Psoas muscle (tissue), 8 donors: ENCODE measurements at regions of chr1 and their contacts with region 1.

Region 1: DNA sequence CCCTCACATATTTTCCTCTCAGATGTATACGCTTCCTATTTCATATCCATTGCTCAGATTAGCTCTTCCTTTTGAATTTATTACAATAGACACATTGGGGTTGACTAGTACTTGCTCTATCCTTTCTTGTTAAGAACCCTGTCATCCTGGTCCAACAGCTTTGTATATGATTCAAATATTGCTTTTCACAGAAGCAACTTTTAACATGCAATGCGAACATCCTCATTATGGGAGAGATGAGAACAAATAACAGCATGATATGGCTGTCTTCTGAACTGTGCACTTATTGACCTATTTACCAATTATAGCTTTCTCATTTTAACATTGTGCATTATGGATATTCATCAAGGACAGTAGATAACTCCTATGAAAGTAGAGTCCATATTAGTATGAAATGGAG is 510.8 kb downstream of the PTPRC start:
- DNase-seq: no peak
- ATAC-seq: no peak
- H3K4me3 ChIP-seq: no peak overlapping the region
- H3K27ac ChIP-seq: no peak overlapping the region
- H3K4me1 ChIP-seq: no peaks in the 10 kb centered on the region
- H3K27me3 ChIP-seq: no peaks in the 10 kb centered on the region
- CTCF ChIP-seq: no peak

Region 2: DNA sequence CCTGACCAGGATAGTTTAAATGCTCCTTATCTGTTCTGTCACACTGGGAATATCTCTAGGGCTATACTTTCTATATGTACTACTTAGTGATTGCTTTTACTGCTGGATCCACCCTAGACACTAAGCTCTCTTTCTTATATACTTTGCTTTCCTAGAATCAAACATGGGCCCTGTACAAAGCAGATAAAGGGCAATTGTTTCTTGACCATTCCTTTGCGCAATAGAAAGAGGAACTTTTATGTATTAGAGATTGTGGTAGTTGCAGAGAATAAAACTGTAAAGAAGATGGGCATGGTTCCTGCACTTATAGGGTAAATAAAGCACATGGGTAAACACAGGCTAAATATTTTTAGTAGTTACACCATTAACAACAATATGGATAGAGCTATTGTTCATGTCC is 667.9 kb before region 1 on chr1:
- intact Hi-C with region 1: no loop called
- DNase-seq: no peak
- ATAC-seq: no peak
- H3K4me3 ChIP-seq: no peak overlapping the region
- H3K27ac ChIP-seq: no peak overlapping the region
- H3K4me1 ChIP-seq: no peaks in the 10 kb centered on the region
- H3K27me3 ChIP-seq: no peaks in the 10 kb centered on the region
- CTCF ChIP-seq: no peak

Region 3: GRCh38 chr1:199161766-199162303 is 12.2 kb after region 1 on chr1:
- intact Hi-C with region 1: loop called in 1 of 2 experiments (anchors 1 kb)
- DNase-seq: no peak
- ATAC-seq: no peak
- H3K4me3 ChIP-seq: no peak overlapping the region
- H3K27ac ChIP-seq: no peak overlapping the region
- H3K4me1 ChIP-seq: no peaks in the 10 kb centered on the region
- H3K27me3 ChIP-seq: no peaks in the 10 kb centered on the region
- CTCF ChIP-seq: no peak